Left cardiac atrium (tissue), 4 donors: ENCODE measurements at regions of chr12 and their contacts with region 1.

Region 1: GRCh38 chr12:57452937-57453509 is 2.1 kb upstream of the INHBE start:
- DNase-seq: peak; percentile 86
- ATAC-seq: peak; percentile 83 to 86

Region 2: GRCh38 chr12:57261428-57261865 is 191.6 kb before region 1 on chr12:
- intact Hi-C with region 1: loop called in 1 of 2 experiments (anchors 5 kb)
- DNase-seq: no peak
- ATAC-seq: peak; percentile 19 to 24

Region 3: DNA sequence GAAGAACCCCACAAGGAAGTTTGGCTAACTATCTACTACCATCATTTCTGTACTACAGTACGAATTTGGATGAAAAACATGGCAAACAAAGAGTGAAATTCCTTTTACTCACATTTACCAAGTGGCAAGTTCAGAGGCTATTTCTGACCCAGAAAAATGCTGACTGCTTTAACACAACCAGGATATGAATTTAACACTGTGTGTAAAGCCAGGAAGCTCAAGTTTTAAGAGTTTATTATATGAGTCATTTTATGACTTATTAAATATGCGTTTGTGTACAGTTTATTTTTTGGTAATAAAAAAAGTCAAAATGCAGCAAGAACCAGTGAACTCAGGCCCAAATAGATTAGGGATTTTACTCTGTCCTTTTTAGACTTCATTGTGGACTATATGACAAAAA is 143.6 kb before region 1 on chr12:
- intact Hi-C with region 1: loop called (anchors 1 to 5 kb)
- DNase-seq: no peak
- ATAC-seq: no peak